IMR-90 (cell line): ENCODE measurements at regions of chr1 and their contacts with region 1.

Region 1: DNA sequence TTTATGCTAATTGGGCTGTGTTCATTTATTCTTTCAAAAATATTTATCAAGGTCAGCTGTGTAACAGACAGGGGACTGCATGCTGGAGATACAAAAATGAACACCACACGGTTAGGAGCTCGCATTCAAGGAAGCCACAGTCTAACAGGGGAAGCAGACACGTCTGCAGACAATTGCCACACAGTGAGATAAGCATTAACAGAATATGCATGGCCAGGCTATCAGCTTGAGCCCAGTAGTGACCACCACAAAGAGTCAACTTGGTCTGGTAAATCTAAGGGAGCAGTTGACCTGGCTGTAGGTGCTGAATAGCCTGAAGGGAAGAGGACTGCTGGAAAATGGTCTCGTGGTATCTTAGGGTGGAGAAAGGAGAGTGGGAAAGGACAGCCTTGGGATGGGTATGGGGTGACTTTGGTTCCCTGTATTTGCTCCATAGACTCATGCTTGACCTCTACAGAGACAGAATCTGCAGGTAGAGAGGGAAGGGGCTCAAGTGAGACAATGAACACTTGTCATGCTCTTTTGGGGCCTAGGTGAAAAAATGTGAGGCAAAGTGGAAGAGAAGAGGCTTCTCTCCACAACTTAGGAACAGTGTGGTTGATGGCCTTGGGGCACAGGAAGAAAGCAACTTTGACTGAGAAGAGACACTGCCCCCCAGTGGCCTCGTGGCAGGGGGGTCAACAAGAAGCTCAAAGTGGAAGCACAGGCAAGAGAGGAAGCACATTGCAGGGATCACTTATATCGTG is 7.6 kb upstream of the NPL start:
- DNase-seq: peak; percentile 31
- ATAC-seq: peak; percentile 47; the same call in 1 of the 2 replicates
- H3K4me3 ChIP-seq: no peak overlapping the region
- H3K27ac ChIP-seq: no peak overlapping the region
- H3K4me1 ChIP-seq: no peaks in the 10 kb centered on the region
- H3K27me3 ChIP-seq: peaks cover 3% of the 10 kb centered on the region
- CTCF ChIP-seq: peak; percentile 44
- POLR2A ChIP-seq: no peak
- RAD21 ChIP-seq: peak; percentile 41

Region 2: GRCh38 chr1:182446033-182446669 is 335.9 kb before region 1 on chr1:
- CTCF ChIA-PET with region 1: interaction called, 7 read pairs
- POLR2A ChIA-PET with region 1: no interaction called
- dilution Hi-C with region 1: no loop called
- in situ Hi-C with region 1: loop called (anchors 10 kb)
- intact Hi-C with region 1: loop called (anchors 1 kb)
- DNase-seq: peak; percentile 40
- ATAC-seq: peak; percentile 93
- H3K4me3 ChIP-seq: no peak overlapping the region
- H3K27ac ChIP-seq: no peak overlapping the region
- H3K4me1 ChIP-seq: no peaks in the 10 kb centered on the region
- H3K27me3 ChIP-seq: no peaks in the 10 kb centered on the region
- CTCF ChIP-seq: peak; percentile 63
- POLR2A ChIP-seq: no peak
- RAD21 ChIP-seq: peak; percentile 53

Region 3: DNA sequence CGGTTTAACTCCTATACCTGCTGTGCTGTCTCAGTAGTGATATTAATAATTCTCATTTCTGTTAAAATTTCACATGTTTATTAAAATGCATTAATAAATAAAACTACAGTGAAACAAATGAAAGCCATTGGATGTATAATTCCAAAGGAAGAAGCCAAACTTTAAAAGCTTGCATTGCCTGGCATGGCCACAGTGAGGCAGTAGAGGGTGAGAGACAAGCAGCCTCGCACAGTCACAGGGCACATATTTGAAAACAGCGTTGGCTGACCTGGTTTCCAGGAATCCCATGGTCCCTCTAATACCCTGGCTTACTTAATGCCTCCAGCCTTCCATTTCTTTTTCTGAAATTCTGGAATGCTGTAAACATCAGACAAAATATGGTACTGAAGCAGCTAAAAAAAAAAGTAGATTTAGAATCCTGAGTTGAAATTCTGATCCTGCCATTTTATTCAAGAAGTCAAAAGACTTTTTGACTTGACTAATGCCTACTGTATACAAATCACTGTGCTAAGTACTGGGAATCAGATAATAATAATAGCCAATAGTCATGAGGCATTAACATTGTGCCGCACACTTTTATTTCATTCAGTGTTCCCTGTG is 186.3 kb before region 1 on chr1:
- CTCF ChIA-PET with region 1: interaction called, 129 read pairs
- POLR2A ChIA-PET with region 1: no interaction called
- dilution Hi-C with region 1: no loop called
- in situ Hi-C with region 1: loop called (anchors 5 kb)
- intact Hi-C with region 1: no loop called
- DNase-seq: peak; percentile 69
- ATAC-seq: peak; percentile 92
- H3K4me3 ChIP-seq: no peak overlapping the region
- H3K27ac ChIP-seq: no peak overlapping the region
- H3K4me1 ChIP-seq: no peaks in the 10 kb centered on the region; the same call in 1 of the 2 replicates
- H3K27me3 ChIP-seq: peaks cover 12% of the 10 kb centered on the region; the same call in 1 of the 2 replicates
- CTCF ChIP-seq: peak; percentile 84
- POLR2A ChIP-seq: no peak
- RAD21 ChIP-seq: peak; percentile 67

Region 4: GRCh38 chr1:182604169-182605164 is 177.5 kb before region 1 on chr1 and contains the start of gene RGS16:
- CTCF ChIA-PET with region 1: interaction called, 129 read pairs
- POLR2A ChIA-PET with region 1: no interaction called
- dilution Hi-C with region 1: no loop called
- in situ Hi-C with region 1: loop called (anchors 5 kb)
- intact Hi-C with region 1: loop called (anchors 1 kb)
- DNase-seq: peak; percentile 62
- ATAC-seq: peak; percentile 99
- H3K4me3 ChIP-seq: peak within 1 kb of the TSS; percentile 28
- H3K27ac ChIP-seq: no peak within 1 kb of the TSS
- H3K4me1 ChIP-seq: peaks cover 2% of the 10 kb centered on the region; the same call in 1 of the 2 replicates
- H3K27me3 ChIP-seq: peaks cover 13% of the 10 kb centered on the region
- CTCF ChIP-seq: no peak
- POLR2A ChIP-seq: no peak
- RAD21 ChIP-seq: no peak
- total RNA-seq, gene RGS16: 0.18 and 0.28 TPM in 2 replicates

Region 5: GRCh38 chr1:182614796-182615454 is 167.1 kb before region 1 on chr1:
- CTCF ChIA-PET with region 1: interaction called, 4 read pairs
- POLR2A ChIA-PET with region 1: no interaction called
- dilution Hi-C with region 1: no loop called
- in situ Hi-C with region 1: no loop called
- intact Hi-C with region 1: loop called (anchors 5 kb)
- DNase-seq: peak; percentile 79
- ATAC-seq: peak; percentile 79
- H3K4me3 ChIP-seq: peak overlapping the region; percentile 49
- H3K27ac ChIP-seq: peak overlapping the region; percentile 41
- H3K4me1 ChIP-seq: peaks cover 11% of the 10 kb centered on the region; the same call in 1 of the 2 replicates
- H3K27me3 ChIP-seq: peaks cover 20% of the 10 kb centered on the region
- CTCF ChIP-seq: no peak
- POLR2A ChIP-seq: no peak; the same call in 1 of the 2 replicates
- RAD21 ChIP-seq: no peak

Region 6: DNA sequence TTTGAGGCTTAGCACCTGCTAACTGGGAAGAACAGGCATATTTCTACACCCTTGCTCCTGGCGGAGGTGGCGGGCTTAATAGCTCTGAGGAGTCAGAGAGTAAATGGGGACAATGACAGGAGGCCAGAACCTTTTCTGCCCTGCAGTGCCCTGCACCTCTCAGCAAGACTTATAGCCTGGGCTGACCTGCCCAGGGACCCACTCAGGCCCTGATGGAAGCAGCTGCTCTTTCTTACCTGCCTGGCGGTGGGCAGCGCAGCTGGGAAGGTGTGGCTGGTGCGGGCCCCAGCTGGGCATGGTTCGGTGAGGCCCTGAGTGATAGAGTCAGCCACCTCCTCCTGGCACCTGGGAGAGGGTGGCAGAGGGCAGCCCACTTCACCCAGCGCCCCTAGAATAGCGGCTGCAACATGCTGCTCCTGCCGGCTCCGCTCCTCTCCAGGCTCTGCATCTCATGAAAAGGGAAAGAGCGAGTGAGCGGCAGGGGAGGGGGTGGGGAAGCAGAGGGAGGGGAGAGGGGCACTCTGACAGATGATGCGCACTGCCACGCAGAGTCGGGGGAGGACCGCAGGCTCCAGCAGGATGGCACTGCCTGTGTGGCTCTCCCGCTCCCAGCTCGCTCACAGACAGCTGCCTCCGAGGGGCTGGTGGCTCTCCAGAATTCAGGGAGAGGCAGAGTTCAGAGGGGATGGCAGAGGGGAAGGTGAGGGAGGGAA is 97.7 kb before region 1 on chr1 and contains the start of gene RGS8:
- CTCF ChIA-PET with region 1: no interaction called
- POLR2A ChIA-PET with region 1: no interaction called
- dilution Hi-C with region 1: no loop called
- in situ Hi-C with region 1: no loop called
- intact Hi-C with region 1: no loop called
- DNase-seq: no peak
- ATAC-seq: no peak
- H3K4me3 ChIP-seq: no peak within 1 kb of the TSS
- H3K27ac ChIP-seq: no peak within 1 kb of the TSS
- H3K4me1 ChIP-seq: no peaks in the 10 kb centered on the region
- H3K27me3 ChIP-seq: peaks cover 15% of the 10 kb centered on the region
- CTCF ChIP-seq: no peak
- POLR2A ChIP-seq: no peak
- RAD21 ChIP-seq: no peak
- total RNA-seq, gene RGS8: not detected in 2 replicates